ENCODE measurements at regions of chr21 and their contacts with region 1.

Region 1: DNA sequence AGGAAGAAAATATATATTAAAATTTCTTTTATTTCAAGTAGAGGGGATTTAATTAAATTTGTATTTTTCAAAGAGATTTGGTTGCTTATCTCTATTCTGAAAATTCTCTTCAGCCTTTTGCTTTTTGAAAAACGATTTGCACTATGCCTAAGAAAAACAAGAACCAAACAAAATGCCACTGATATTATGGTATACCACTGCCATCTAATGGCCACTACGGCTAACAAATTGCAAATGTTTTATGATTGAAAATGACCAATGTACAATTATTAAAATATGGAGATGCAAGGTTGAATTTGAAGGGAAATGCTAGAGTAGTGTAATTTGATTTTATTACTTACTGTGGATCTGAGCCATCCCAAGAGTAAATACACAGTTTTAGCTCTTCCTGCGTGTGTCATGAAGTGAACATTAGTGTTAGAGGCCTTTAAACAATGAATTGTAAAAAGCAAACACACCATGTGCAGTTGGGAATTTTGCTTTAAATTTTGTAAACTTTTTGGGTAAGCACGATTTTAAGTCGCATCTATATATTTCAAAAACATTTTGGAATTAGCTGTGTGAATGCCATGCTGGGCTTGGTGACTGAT is 137.4 kb upstream of the USP25 start:
- DNase-seq: peak; percentile 89
- ATAC-seq: peak; percentile 90
- H3K4me3 ChIP-seq: peak overlapping the region; percentile 57
- H3K27ac ChIP-seq: peak overlapping the region; percentile 96
- H3K4me1 ChIP-seq: peaks cover 25% of the 10 kb centered on the region
- H3K27me3 ChIP-seq: no peaks in the 10 kb centered on the region
- CTCF ChIP-seq: peak; percentile 91

Region 2: DNA sequence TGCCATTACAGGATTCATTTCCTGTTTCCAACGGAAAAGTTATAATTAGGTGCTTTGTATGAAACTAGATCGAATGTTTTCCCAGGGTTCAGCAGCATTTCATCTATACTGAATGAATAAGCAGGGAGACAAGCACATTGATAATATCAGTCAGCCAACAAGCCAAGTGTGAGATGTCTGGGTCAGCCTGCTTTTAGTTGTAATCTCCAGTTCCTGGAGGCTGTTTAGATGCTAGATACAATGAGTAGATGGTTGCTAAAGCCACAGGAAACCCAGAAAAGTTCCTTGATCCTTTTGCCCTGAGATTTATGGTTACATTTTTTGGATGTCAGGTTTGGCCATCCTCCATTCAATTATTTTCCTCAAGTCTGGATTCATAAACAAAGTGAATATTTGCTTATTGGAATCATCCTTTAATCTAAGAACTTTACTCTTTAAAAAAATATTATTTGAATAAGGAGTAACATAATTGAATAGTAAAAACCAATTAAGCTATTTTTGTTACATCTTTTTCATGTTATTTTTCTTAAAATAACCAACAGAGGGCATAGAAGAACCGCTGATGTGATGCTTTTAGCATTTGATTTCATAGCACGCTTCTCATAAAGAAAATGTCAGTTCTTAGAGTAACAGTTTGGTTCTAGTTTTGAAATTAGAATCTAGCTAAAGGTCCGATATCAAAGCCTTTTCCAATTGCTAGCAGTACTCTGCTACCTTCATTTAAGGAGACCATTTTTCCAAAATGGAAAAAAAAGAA is 1286.0 kb before region 1 on chr21:
- CTCF ChIA-PET with region 1: no interaction called
- POLR2A ChIA-PET with region 1: no interaction called
- intact Hi-C with region 1: loop called (anchors 1 kb)
- DNase-seq: peak; percentile 51
- ATAC-seq: no peak
- H3K4me3 ChIP-seq: no peak overlapping the region
- H3K27ac ChIP-seq: no peak overlapping the region
- H3K4me1 ChIP-seq: peaks cover 10% of the 10 kb centered on the region; the same call in 1 of the 2 replicates
- H3K27me3 ChIP-seq: peaks cover 37% of the 10 kb centered on the region
- CTCF ChIP-seq: peak; percentile 58

Region 3: DNA sequence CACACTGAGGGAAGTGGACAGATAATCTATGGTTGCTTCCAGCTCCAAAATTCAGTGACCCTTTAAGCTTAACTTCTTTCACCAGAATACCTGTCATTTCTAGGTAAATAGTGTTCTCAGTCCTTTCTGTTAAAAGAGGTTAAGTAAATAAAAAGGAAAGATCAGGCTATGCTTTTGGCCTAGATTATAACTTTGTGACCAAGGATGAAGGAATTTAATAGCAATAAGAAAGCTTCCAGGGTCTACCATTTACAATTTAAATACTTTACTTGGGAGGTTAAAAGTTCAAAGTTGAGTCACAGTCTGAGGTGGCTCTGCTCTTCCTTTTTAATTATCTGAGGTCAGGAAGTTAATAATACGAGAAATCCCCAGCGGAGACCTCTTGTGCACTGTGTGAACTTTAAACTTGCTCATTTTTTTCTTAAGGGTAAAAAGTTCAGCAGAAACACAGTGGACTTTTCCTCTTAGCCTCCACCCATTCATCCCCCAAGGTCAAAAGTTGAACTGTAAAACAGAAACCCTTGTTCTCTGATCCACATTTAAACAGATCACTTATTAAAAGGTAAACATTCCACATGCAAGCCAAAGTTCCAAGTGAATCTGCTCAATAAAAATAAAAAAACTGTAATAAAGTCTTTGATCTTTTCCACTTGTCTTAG is 714.7 kb before region 1 on chr21:
- CTCF ChIA-PET with region 1: no interaction called
- POLR2A ChIA-PET with region 1: no interaction called
- intact Hi-C with region 1: loop called (anchors 1 kb)
- DNase-seq: peak; percentile 97
- ATAC-seq: peak; percentile 62
- H3K4me3 ChIP-seq: peak overlapping the region; percentile 35
- H3K27ac ChIP-seq: peak overlapping the region; percentile 94
- H3K4me1 ChIP-seq: peaks cover 88% of the 10 kb centered on the region
- H3K27me3 ChIP-seq: no peaks in the 10 kb centered on the region
- CTCF ChIP-seq: no peak

Region 4: GRCh38 chr21:15483138-15483780 is 109.1 kb before region 1 on chr21:
- CTCF ChIA-PET with region 1: interaction called, 5 read pairs
- POLR2A ChIA-PET with region 1: no interaction called
- intact Hi-C with region 1: loop called (anchors 1 kb)
- DNase-seq: peak; percentile 95
- ATAC-seq: peak; percentile 100
- H3K4me3 ChIP-seq: no peak overlapping the region
- H3K27ac ChIP-seq: no peak overlapping the region
- H3K4me1 ChIP-seq: peaks cover 16% of the 10 kb centered on the region
- H3K27me3 ChIP-seq: no peaks in the 10 kb centered on the region
- CTCF ChIP-seq: peak; percentile 96

Region 5: DNA sequence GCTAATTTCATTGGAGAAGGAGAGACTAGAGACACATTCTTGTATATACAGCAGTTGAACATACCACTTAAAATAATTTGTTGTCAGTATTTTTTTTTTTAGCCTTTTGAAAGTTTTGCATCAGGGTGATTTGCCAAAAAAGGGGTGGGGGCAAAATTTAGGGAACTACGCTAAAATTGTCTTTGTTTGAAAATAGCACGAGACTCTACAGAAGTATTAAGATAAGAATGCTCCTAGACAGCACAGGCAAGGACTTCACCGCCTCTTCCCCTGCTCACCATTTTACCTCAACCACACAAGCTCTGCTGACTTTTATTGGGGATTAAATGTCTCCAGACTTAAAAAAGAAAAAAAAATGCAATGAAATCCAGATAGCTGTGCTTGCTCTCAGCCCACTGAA is 98.7 kb before region 1 on chr21:
- CTCF ChIA-PET with region 1: no interaction called
- POLR2A ChIA-PET with region 1: no interaction called
- intact Hi-C with region 1: no loop called
- DNase-seq: no peak
- ATAC-seq: no peak
- H3K4me3 ChIP-seq: no peak overlapping the region
- H3K27ac ChIP-seq: no peak overlapping the region
- H3K4me1 ChIP-seq: no peaks in the 10 kb centered on the region
- H3K27me3 ChIP-seq: no peaks in the 10 kb centered on the region
- CTCF ChIP-seq: no peak

Region 6: GRCh38 chr21:15667010-15667409 is 74.6 kb after region 1 on chr21:
- CTCF ChIA-PET with region 1: no interaction called
- POLR2A ChIA-PET with region 1: no interaction called
- intact Hi-C with region 1: loop called (anchors 2 kb)
- DNase-seq: peak; percentile 93
- ATAC-seq: peak; percentile 95
- H3K4me3 ChIP-seq: no peak overlapping the region
- H3K27ac ChIP-seq: peak overlapping the region; percentile 7
- H3K4me1 ChIP-seq: peaks cover 17% of the 10 kb centered on the region
- H3K27me3 ChIP-seq: no peaks in the 10 kb centered on the region
- CTCF ChIP-seq: no peak

Region 7: DNA sequence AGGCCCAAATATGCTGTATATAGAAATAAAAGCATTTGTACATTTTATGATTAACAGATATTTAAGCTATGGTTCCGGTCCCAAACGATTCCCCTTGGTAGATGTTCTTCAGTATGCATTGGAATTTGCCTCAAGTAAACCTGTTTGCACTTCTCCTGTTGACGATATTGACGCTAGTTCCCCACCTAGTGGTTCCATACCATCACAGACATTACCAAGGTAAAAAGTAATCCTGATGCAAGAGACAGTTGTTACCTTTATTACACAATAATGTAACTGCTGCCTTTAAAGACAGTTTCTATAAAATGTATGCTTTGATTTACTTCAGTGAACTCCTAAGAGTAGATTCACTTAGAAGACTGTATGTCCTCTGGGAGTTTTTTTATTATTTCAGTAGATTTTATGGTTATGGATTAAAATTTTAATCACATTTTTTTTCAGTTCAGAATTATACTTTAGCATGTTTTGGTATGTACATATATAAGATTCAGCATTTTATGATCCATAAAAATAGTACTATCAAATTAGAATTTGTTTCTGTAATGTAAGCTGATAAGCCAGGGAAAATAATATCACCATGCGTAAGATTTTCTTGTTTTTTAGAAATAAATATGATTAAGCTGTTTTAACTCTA is 233.9 kb after region 1 on chr21:
- CTCF ChIA-PET with region 1: no interaction called
- POLR2A ChIA-PET with region 1: no interaction called
- intact Hi-C with region 1: loop called (anchors 1 kb)
- DNase-seq: peak; percentile 84
- ATAC-seq: peak; percentile 94
- H3K4me3 ChIP-seq: no peak overlapping the region
- H3K27ac ChIP-seq: no peak overlapping the region
- H3K4me1 ChIP-seq: 0 out of 2 replicates have a peak, but pooled peaks cover 2% of the 10 kb centered on the region
- H3K27me3 ChIP-seq: no peaks in the 10 kb centered on the region
- CTCF ChIP-seq: peak; percentile 92